Left cardiac atrium (tissue), 4 donors: ENCODE measurements at regions of chr12 and their contacts with region 1.

Region 1: GRCh38 chr12:45388545-45388944 is 172.7 kb downstream of the ANO6 start:
- DNase-seq: no peak
- ATAC-seq: peak; percentile 66 to 67

Region 2: DNA sequence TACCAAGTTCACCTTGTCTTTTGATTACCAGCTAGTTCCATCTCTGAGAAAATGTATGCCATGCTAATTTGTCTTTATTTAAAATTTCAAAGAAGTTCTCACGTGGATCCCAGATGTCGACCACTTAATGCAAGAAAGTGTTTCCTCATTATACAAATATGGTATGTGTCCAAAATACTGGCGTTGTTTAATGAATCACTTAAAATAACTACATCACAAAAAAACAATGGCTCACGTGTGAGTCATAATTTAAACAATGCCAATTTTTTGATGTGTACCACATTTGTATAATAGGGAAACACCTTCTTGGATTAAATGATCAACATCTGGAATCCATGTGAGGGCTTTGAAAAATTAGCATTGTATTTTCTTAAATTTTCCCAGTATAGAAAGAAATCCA is 378.5 kb before region 1 on chr12:
- intact Hi-C with region 1: no loop called
- DNase-seq: no peak
- ATAC-seq: no peak

Region 3: GRCh38 chr12:45168976-45169375 is 219.6 kb before region 1 on chr12:
- intact Hi-C with region 1: no loop called
- DNase-seq: no peak
- ATAC-seq: no peak

Region 4: DNA sequence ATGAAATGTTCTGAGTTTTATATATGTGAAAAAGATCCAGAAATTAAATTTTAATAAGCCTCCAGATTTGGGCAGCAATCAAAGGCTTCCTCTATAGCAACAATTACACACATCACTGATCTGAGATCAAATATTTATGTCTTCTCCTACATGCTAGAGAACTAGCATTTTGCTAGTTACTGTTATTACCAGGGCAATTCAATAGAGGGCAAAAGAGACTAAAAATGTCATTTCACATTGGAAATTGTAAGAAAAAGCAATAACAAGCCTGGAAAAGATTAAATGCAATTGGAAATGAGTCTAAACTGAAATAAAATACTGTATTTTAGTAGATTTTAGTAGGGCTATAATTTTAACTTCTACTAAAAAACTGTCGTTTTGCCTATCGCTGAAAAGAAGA is 205.3 kb before region 1 on chr12:
- intact Hi-C with region 1: loop called (anchors 5 to 10 kb)
- DNase-seq: no peak
- ATAC-seq: no peak